ENCODE measurements at regions of chr5 and their contacts with region 1.

Region 1: GRCh38 chr5:96614110-96614691 is 48.0 kb upstream of the CAST start:
- DNase-seq: peak; percentile 73
- H3K4me3 Mint-ChIP-seq: peak overlapping the region; percentile 29
- H3K27ac Mint-ChIP-seq: peak overlapping the region; percentile 34
- H3K4me1 Mint-ChIP-seq: peaks cover 34% of the 10 kb centered on the region
- H3K27me3 Mint-ChIP-seq: no peaks in the 10 kb centered on the region
- CTCF ChIP-seq: peak; percentile 68

Region 2: GRCh38 chr5:96629774-96630173 is 15.6 kb after region 1 on chr5:
- CTCF ChIA-PET with region 1: interaction called, 9 read pairs
- intact Hi-C with region 1: loop called (anchors 1 kb)
- DNase-seq: peak; percentile 64
- H3K4me3 Mint-ChIP-seq: peak overlapping the region; percentile 16
- H3K27ac Mint-ChIP-seq: peak overlapping the region; percentile 36
- H3K4me1 Mint-ChIP-seq: peaks cover 81% of the 10 kb centered on the region
- H3K27me3 Mint-ChIP-seq: no peaks in the 10 kb centered on the region
- CTCF ChIP-seq: no peak

Region 3: GRCh38 chr5:96687812-96688453 is 73.7 kb after region 1 on chr5:
- CTCF ChIA-PET with region 1: interaction called, 20 read pairs
- intact Hi-C with region 1: loop called (anchors 1 kb)
- DNase-seq: no peak
- H3K4me3 Mint-ChIP-seq: no peak overlapping the region
- H3K27ac Mint-ChIP-seq: no peak overlapping the region
- H3K4me1 Mint-ChIP-seq: peaks cover 30% of the 10 kb centered on the region
- H3K27me3 Mint-ChIP-seq: no peaks in the 10 kb centered on the region
- CTCF ChIP-seq: peak; percentile 65

Region 4: GRCh38 chr5:96729156-96729555 is 115.0 kb after region 1 on chr5:
- CTCF ChIA-PET with region 1: interaction called, 8 read pairs
- intact Hi-C with region 1: loop called (anchors 1 kb)
- DNase-seq: no peak
- H3K4me3 Mint-ChIP-seq: no peak overlapping the region
- H3K27ac Mint-ChIP-seq: no peak overlapping the region
- H3K4me1 Mint-ChIP-seq: peaks cover 17% of the 10 kb centered on the region
- H3K27me3 Mint-ChIP-seq: no peaks in the 10 kb centered on the region
- CTCF ChIP-seq: no peak

Region 5: DNA sequence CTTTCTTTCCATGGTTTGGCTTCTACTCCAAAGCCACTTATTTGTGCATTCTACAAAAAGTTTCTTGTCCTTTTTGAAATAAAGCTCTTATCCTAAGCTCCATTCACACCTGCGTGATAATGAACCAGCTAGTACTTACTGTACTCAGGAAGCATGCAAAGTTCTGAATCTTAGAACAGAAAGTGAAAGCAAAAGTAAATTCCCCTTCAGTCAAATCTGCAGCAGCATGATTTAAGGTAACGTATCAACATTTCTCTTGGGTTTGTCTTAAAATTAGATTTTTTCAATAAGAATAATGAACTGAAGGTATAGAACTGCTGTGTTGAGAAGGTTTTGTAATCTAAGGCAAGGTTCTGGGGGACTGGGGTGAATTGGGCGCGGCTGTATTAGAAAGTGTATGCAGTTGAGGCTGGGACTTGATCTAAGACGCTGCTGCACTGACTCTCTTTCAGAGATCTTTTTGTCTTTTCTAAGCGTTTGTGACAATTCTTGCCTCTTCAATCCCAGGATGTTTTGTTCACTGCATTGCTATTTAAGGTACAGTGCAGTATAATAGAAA is 262.2 kb after region 1 on chr5 and contains the start of gene ERAP2:
- CTCF ChIA-PET with region 1: no interaction called
- intact Hi-C with region 1: loop called (anchors 5 kb)
- DNase-seq: peak; percentile 22
- H3K4me3 Mint-ChIP-seq: peak within 1 kb of the TSS; percentile 67
- H3K27ac Mint-ChIP-seq: peak within 1 kb of the TSS; percentile 76
- H3K4me1 Mint-ChIP-seq: peaks cover 44% of the 10 kb centered on the region
- H3K27me3 Mint-ChIP-seq: no peaks in the 10 kb centered on the region
- CTCF ChIP-seq: no peak
- total RNA-seq, gene ERAP2: 67.7 TPM in 2 replicates